ENCODE measurements at regions of chr6 and their contacts with region 1.

Region 1: GRCh38 chr6:36094753-36095496 is 35.4 kb upstream of the MAPK13 start:
- DNase-seq: peak; percentile 83 to 94 (median 84)
- ATAC-seq: peak; percentile 92
- H3K4me3 ChIP-seq: no peak overlapping the region
- H3K27ac ChIP-seq: peak overlapping the region; percentile 52
- H3K4me1 ChIP-seq: peaks cover 6 to 27% of the 10 kb centered on the region in 2 experiments
- H3K27me3 ChIP-seq: no peaks in the 10 kb centered on the region
- CTCF ChIP-seq: peak; percentile 91 to 98 (median 95)
- EP300 ChIP-seq: no peak; the same call in 1 of the 2 replicates
- POLR2A ChIP-seq: no peak
- RAD21 ChIP-seq: peak; percentile 97

Region 2: DNA sequence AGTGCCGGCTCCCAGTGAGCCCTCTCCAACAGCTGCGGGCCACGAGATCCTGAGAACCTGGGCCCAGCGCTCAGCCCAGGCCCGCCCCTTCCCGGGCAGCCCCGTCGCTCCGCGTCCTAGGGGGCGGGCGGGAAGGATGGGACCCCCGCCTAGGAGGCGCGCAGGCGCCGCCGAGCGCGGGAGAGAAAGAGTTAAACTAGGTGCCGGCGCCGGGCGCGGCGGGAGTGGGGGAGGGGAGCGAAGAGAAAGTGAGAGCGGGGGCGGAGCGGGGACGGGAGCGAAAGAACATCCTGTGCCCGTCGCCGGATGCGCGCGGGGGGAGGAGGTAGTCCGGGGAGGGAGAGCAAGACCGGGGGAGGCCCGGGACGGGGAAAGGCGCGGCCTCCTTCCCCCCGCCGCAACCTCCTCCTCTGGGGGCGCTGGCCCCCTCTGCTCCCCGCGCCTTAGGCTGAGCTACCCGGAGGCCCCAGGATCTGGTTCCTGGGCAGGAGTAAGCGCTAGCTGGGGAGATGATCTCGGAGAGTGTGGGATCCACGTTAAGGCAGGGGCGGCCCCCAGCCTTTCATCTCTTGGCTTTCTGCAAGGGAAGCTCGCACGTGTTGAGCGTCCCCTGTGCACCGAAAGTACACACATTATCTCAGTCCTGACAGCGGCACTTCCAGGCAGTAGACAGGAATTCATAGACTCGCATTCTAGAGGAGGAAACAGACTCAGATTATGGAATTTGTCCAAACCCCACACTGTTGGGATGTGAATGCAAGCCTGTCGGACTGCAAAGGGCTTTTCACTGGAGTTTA is 363.0 kb before region 1 on chr6:
- CTCF ChIA-PET with region 1: no interaction called
- POLR2A ChIA-PET with region 1: no interaction called
- in situ Hi-C with region 1: no loop called
- intact Hi-C with region 1: loop called (anchors 10 kb)
- DNase-seq: peak; percentile 97 to 98 (median 98)
- ATAC-seq: peak; percentile 75
- H3K4me3 ChIP-seq: peak overlapping the region; percentile 77
- H3K27ac ChIP-seq: peak overlapping the region; percentile 85
- H3K4me1 ChIP-seq: peaks cover 46 to 63% of the 10 kb centered on the region in 2 experiments
- H3K27me3 ChIP-seq: no peaks in the 10 kb centered on the region
- CTCF ChIP-seq: peak; percentile 30 to 50 (median 42)
- EP300 ChIP-seq: peak; percentile 65; the same call in 1 of the 2 replicates
- POLR2A ChIP-seq: peak; percentile 89
- RAD21 ChIP-seq: peak; percentile 12 to 30; a peak in 1 of 4 replicates

Region 3: GRCh38 chr6:35955976-35956375 is 138.9 kb before region 1 on chr6:
- CTCF ChIA-PET with region 1: no interaction called
- POLR2A ChIA-PET with region 1: no interaction called
- in situ Hi-C with region 1: no loop called
- intact Hi-C with region 1: loop called (anchors 5 kb)
- DNase-seq: peak in 1 of 4 experiments; percentile 27
- ATAC-seq: peak; percentile 74
- H3K4me3 ChIP-seq: no peak overlapping the region
- H3K27ac ChIP-seq: no peak overlapping the region
- H3K4me1 ChIP-seq: no peaks in the 10 kb centered on the region
- H3K27me3 ChIP-seq: peaks cover 39 to 40% of the 10 kb centered on the region in 2 experiments
- CTCF ChIP-seq: peak; percentile 65 to 71 (median 69)
- EP300 ChIP-seq: no peak
- POLR2A ChIP-seq: no peak
- RAD21 ChIP-seq: peak; percentile 27 to 60; a peak in 3 of 4 replicates

Region 4: GRCh38 chr6:36123257-36124139 is 28.6 kb after region 1 on chr6:
- CTCF ChIA-PET with region 1: no interaction called
- POLR2A ChIA-PET with region 1: interaction called, 3 read pairs
- in situ Hi-C with region 1: no loop called
- intact Hi-C with region 1: loop called (anchors 1 kb)
- DNase-seq: peak; percentile 92 to 95 (median 94)
- ATAC-seq: peak; percentile 87
- H3K4me3 ChIP-seq: no peak overlapping the region
- H3K27ac ChIP-seq: 0 out of 3 replicates have a peak overlapping the region, but pooled peaks have one; percentile 2
- H3K4me1 ChIP-seq: peaks cover 55 to 69% of the 10 kb centered on the region in 2 experiments
- H3K27me3 ChIP-seq: no peaks in the 10 kb centered on the region
- CTCF ChIP-seq: peak; percentile 79 to 92 (median 92)
- EP300 ChIP-seq: peak; percentile 40; the same call in 1 of the 2 replicates
- POLR2A ChIP-seq: no peak
- RAD21 ChIP-seq: peak; percentile 74 to 90

Region 5: DNA sequence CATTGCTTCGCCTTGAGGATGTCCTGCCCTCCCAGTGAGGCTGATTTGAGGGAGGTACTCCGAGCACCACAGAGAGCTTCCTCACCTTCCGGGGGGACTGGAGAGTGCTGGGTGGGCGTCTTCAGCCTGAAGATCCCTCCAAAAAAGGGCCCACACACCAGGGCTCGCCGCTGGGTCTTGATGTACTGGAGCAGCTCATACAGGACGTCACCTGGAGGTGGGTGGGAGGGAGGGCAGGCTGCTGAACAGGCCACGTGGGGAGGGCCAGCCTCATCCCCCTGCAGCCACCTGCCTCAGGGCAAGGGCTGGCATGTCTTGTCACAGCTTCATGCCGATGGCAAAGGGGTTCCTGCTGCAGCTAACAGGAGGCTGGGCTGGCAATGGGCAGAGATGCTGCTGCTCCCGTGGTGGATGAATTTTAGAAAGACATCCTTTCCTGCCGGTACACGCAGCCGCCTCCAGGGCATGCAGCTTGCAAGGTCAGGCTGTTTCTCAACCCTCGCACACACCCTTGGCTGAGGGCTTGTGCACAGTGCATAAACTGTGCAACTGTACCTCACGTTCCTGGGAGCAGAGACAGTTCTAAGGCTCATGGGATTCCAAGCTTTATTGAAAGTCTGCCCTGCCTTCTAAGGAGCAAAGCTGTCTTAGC is 278.6 kb after region 1 on chr6:
- CTCF ChIA-PET with region 1: no interaction called
- POLR2A ChIA-PET with region 1: no interaction called
- in situ Hi-C with region 1: no loop called
- intact Hi-C with region 1: no loop called
- DNase-seq: no peak
- ATAC-seq: peak; percentile 39
- H3K4me3 ChIP-seq: no peak overlapping the region
- H3K27ac ChIP-seq: no peak overlapping the region
- H3K4me1 ChIP-seq: peaks cover 0 to 10% of the 10 kb centered on the region in 2 experiments; a peak in 1 of 5 replicates
- H3K27me3 ChIP-seq: peaks cover 46 to 76% of the 10 kb centered on the region in 2 experiments
- CTCF ChIP-seq: no peak
- EP300 ChIP-seq: no peak
- POLR2A ChIP-seq: no peak
- RAD21 ChIP-seq: no peak